Activated B cell treated with CpG ODN at 0.5 μM for 24 hours (primary cell): ENCODE measurements at regions of chr2 and their contacts with region 1.

Region 1: DNA sequence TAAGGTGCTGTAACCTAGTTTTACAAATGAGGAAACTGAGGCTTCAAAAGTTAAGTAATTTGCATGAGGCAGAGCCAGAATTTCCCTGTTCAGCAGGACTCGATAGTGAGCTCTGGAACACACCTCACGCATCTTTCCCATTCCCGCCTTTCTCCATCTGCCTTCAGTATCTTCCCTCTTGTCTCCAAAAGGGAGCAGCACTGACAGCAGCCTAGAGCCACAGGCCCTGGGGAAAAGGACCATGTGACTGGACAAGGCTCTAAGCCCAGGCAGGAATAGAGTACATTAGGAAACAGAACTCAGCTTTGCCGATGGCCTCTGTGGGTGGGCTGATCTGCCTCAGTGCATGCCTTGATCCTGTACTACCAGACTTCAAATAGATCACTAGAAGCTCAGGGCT is 21.5 kb downstream of the GPR155 start:
- DNase-seq: no peak
- ATAC-seq: no peak
- H3K4me3 Mint-ChIP-seq: no peak overlapping the region
- H3K27ac Mint-ChIP-seq: no peak overlapping the region
- H3K4me1 Mint-ChIP-seq: no peaks in the 10 kb centered on the region
- H3K27me3 Mint-ChIP-seq: no peaks in the 10 kb centered on the region
- CTCF ChIP-seq: no peak

Region 2: GRCh38 chr2:173402405-173402974 is 1062.8 kb before region 1 on chr2:
- CTCF ChIA-PET with region 1: no interaction called
- POLR2A ChIA-PET with region 1: no interaction called
- intact Hi-C with region 1: loop called (anchors 2 kb)
- DNase-seq: peak; percentile 48
- ATAC-seq: peak; percentile 79
- H3K4me3 Mint-ChIP-seq: no peak overlapping the region
- H3K27ac Mint-ChIP-seq: no peak overlapping the region
- H3K4me1 Mint-ChIP-seq: peaks cover 4% of the 10 kb centered on the region
- H3K27me3 Mint-ChIP-seq: peaks cover 47% of the 10 kb centered on the region
- CTCF ChIP-seq: no peak

Region 3: GRCh38 chr2:173965329-173966025 is 499.9 kb before region 1 on chr2 and contains the start of gene SP3:
- CTCF ChIA-PET with region 1: no interaction called
- POLR2A ChIA-PET with region 1: no interaction called
- intact Hi-C with region 1: no loop called
- DNase-seq: peak; percentile 91
- ATAC-seq: peak; percentile 66
- H3K4me3 Mint-ChIP-seq: peak within 1 kb of the TSS; percentile 93
- H3K27ac Mint-ChIP-seq: peak within 1 kb of the TSS; percentile 98
- H3K4me1 Mint-ChIP-seq: peaks cover 45% of the 10 kb centered on the region
- H3K27me3 Mint-ChIP-seq: no peaks in the 10 kb centered on the region
- CTCF ChIP-seq: no peak
- total RNA-seq, gene SP3: 124 and 139 TPM in 2 replicates

Region 4: GRCh38 chr2:174376967-174377366 is 88.4 kb before region 1 on chr2:
- CTCF ChIA-PET with region 1: no interaction called
- POLR2A ChIA-PET with region 1: no interaction called
- intact Hi-C with region 1: no loop called
- DNase-seq: no peak
- ATAC-seq: no peak
- H3K4me3 Mint-ChIP-seq: no peak overlapping the region
- H3K27ac Mint-ChIP-seq: no peak overlapping the region
- H3K4me1 Mint-ChIP-seq: no peaks in the 10 kb centered on the region
- H3K27me3 Mint-ChIP-seq: no peaks in the 10 kb centered on the region
- CTCF ChIP-seq: no peak

Region 5: GRCh38 chr2:174522553-174522952 is 57.2 kb after region 1 on chr2:
- CTCF ChIA-PET with region 1: interaction called, 61 read pairs
- POLR2A ChIA-PET with region 1: interaction called, 3 read pairs
- intact Hi-C with region 1: loop called (anchors 1 kb)
- DNase-seq: no peak
- ATAC-seq: no peak
- H3K4me3 Mint-ChIP-seq: no peak overlapping the region
- H3K27ac Mint-ChIP-seq: no peak overlapping the region
- H3K4me1 Mint-ChIP-seq: peaks cover 11% of the 10 kb centered on the region
- H3K27me3 Mint-ChIP-seq: peaks cover 4% of the 10 kb centered on the region
- CTCF ChIP-seq: no peak

Region 6: DNA sequence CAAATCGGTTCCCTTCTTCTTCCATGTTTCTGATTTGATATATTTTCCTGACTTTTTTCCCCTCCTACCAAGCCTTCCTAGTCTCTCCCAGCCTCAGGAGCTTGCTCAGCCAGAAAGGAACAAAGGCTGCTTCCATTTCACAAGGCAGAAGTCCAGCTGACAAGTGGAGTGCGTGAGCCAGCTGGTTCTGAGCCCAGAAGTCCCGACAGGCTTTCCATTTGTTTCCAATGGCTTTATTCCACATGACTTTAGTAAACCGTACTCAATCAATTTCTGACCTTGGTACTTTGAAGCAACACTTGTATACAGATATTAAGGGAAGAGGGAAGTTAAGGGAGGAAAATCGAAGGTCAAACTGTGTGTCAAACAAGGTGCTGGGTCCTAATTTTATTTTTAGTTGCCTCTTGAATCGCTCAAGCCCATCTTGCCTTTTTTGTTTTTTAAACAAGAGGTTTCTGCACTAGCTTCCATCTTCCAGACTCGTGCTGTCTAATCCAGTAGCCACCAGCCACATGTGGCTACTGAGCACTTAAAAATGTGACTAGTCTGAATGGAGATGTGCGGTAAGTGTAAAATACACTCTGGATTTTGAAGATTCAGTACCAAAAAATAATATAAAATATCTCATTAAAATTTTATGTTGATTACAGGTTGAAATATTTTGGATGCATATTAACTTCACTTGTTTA is 96.1 kb after region 1 on chr2:
- CTCF ChIA-PET with region 1: interaction called, 16 read pairs
- POLR2A ChIA-PET with region 1: no interaction called
- intact Hi-C with region 1: no loop called
- DNase-seq: no peak
- ATAC-seq: no peak
- H3K4me3 Mint-ChIP-seq: no peak overlapping the region
- H3K27ac Mint-ChIP-seq: no peak overlapping the region
- H3K4me1 Mint-ChIP-seq: no peaks in the 10 kb centered on the region
- H3K27me3 Mint-ChIP-seq: no peaks in the 10 kb centered on the region
- CTCF ChIP-seq: no peak

Region 7: GRCh38 chr2:174673876-174674275 is 208.5 kb after region 1 on chr2:
- CTCF ChIA-PET with region 1: no interaction called
- POLR2A ChIA-PET with region 1: interaction called, 12 read pairs
- intact Hi-C with region 1: no loop called
- DNase-seq: no peak
- ATAC-seq: no peak
- H3K4me3 Mint-ChIP-seq: no peak overlapping the region
- H3K27ac Mint-ChIP-seq: no peak overlapping the region
- H3K4me1 Mint-ChIP-seq: no peaks in the 10 kb centered on the region
- H3K27me3 Mint-ChIP-seq: no peaks in the 10 kb centered on the region
- CTCF ChIP-seq: no peak

Region 8: DNA sequence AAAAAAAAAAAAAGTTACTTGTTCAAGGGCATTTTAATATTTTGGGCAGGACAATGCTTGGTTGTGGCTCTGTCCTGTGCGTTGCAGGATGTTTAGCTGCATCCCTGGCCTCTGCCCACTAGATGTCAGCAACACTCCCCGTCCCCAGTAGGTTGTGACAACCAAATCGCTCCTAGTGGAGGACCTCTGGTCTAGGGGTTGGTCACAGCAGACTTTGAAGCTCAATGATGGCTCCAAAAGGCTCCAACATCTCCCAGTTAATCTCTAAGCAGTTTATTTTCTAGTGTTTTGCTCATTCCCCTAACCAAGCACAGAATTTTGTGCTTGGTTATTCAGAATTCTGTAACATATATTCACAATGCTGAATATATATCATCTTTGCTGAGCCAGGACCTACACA is 231.9 kb after region 1 on chr2:
- CTCF ChIA-PET with region 1: interaction called, 44 read pairs
- POLR2A ChIA-PET with region 1: no interaction called
- intact Hi-C with region 1: no loop called
- DNase-seq: peak; percentile 29
- ATAC-seq: peak; percentile 98
- H3K4me3 Mint-ChIP-seq: no peak overlapping the region
- H3K27ac Mint-ChIP-seq: no peak overlapping the region
- H3K4me1 Mint-ChIP-seq: peaks cover 2% of the 10 kb centered on the region
- H3K27me3 Mint-ChIP-seq: peaks cover 15% of the 10 kb centered on the region
- CTCF ChIP-seq: no peak